ENCODE measurements at regions of chr2 and their contacts with region 1.

Region 1: GRCh38 chr2:73385595-73386341 is at the start of gene ALMS1:
- DNase-seq: peak; percentile 94
- ATAC-seq: peak; percentile 89
- H3K4me3 Mint-ChIP-seq: peak within 1 kb of the TSS; percentile 91
- H3K27ac Mint-ChIP-seq: peak within 1 kb of the TSS; percentile 91
- H3K4me1 Mint-ChIP-seq: peaks cover 27% of the 10 kb centered on the region
- H3K27me3 Mint-ChIP-seq: no peaks in the 10 kb centered on the region
- total RNA-seq, gene ALMS1: 19.2 to 24.0 TPM

Region 2: DNA sequence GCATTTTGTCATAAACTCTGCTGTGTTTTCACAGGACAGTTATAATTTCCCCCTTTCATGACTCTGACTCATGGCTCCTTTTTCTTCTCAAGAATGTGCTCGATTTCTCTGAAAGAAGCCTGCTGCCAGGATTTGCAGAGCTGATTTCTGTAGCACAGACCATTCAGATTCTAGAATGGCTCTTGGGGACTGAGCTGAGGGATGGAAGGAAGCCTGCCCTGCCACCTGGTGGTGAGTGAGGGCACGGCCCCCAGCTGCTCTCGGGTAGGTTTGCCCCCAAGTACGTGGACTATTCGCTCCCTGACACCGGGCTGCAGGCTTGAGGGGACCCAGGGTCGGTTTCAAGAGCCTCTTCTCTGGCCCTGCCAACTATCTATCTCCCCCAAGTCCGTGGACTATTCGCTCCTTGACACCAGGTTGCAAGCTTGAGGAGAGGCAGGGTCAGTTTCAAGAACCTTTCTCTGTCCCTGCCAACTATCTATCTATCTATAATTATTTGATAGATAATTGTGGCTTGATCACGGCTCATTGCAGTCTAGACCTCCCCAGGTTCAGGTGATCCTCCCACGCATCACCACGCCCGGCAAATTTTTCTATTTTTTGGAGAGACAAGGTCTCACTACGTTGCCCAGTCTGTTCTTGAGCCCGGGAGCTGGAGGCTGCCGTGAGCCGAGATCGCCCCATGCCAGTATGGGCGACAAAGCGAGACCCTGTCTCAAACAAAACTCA is 173.2 kb before region 1 on chr2:
- CTCF ChIA-PET with region 1: no interaction called
- POLR2A ChIA-PET with region 1: no interaction called
- intact Hi-C with region 1: loop called (anchors 1 kb)
- DNase-seq: peak; percentile 89
- ATAC-seq: peak; percentile 79
- H3K4me3 Mint-ChIP-seq: no peak overlapping the region
- H3K27ac Mint-ChIP-seq: no peak overlapping the region
- H3K4me1 Mint-ChIP-seq: peaks cover 32% of the 10 kb centered on the region
- H3K27me3 Mint-ChIP-seq: peaks cover 7% of the 10 kb centered on the region

Region 3: GRCh38 chr2:73284296-73285158 is 101.2 kb before region 1 on chr2 and contains the start of gene FBXO41:
- CTCF ChIA-PET with region 1: interaction called, 5 read pairs
- POLR2A ChIA-PET with region 1: interaction called, 4 read pairs
- intact Hi-C with region 1: loop called in 1 of 2 experiments (anchors 1 kb)
- DNase-seq: peak; percentile 86
- ATAC-seq: peak; percentile 85
- H3K4me3 Mint-ChIP-seq: peak within 1 kb of the TSS; percentile 78
- H3K27ac Mint-ChIP-seq: peak within 1 kb of the TSS; percentile 75
- H3K4me1 Mint-ChIP-seq: peaks cover 15% of the 10 kb centered on the region
- H3K27me3 Mint-ChIP-seq: peaks cover 19% of the 10 kb centered on the region
- total RNA-seq, gene FBXO41: 27.7 to 29.5 TPM

Region 4: GRCh38 chr2:74119912-74120825 is 734.4 kb after region 1 on chr2:
- CTCF ChIA-PET with region 1: no interaction called
- POLR2A ChIA-PET with region 1: no interaction called
- intact Hi-C with region 1: loop called in 1 of 2 experiments (anchors 5 kb)
- DNase-seq: peak; percentile 92
- ATAC-seq: peak; percentile 97
- H3K4me3 Mint-ChIP-seq: peak overlapping the region; percentile 81
- H3K27ac Mint-ChIP-seq: peak overlapping the region; percentile 89
- H3K4me1 Mint-ChIP-seq: peaks cover 7% of the 10 kb centered on the region
- H3K27me3 Mint-ChIP-seq: peaks cover 3% of the 10 kb centered on the region

Region 5: DNA sequence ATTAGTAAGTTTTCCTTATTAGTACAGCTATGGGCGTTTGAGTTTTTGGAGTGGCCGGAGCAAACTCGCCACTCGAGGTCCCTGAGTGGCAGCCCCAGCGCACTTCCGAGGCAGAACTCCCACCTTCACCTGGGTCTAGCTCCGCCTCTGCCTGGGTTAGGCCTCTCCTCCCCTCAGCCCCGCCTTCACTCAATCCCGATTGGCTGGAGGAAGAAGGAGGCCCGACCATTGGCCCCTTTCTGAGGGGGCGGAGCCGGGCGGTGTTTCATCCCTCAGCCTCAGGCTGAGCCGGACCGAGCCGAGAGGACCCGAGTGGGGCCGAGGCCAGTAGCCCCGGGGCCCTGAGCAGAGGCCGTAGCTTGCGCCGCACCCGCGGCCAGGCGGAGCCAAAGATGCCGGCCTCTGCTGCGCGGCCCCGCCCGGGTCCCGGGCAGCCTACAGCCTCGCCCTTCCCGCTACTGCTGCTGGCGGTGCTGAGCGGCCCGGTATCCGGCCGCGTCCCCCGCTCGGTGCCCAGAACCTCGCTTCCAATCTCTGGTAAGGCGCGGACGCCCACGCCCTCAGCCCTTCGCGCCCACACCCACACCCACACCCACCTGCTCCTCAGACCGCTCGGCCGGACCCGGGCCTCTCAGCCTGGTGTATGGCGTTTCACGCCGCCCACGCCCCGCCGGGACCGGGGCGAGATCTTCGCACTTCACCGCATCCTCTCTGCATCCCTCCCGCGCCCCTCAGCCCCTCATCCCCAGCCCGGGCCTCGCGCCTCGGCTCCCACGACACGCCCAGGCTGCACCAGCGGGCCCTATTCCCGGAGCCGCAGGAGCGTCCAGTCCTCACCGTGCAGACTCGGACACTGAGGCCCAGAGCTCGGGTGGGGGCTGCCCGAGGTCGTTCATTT is 1268.5 kb after region 1 on chr2 and contains the start of gene SEMA4F:
- CTCF ChIA-PET with region 1: interaction called, 3 read pairs
- POLR2A ChIA-PET with region 1: no interaction called
- intact Hi-C with region 1: loop called in 1 of 2 experiments (anchors 10 kb)
- DNase-seq: peak; percentile 97
- ATAC-seq: peak; percentile 100
- H3K4me3 Mint-ChIP-seq: peak within 1 kb of the TSS; percentile 76
- H3K27ac Mint-ChIP-seq: peak within 1 kb of the TSS; percentile 49
- H3K4me1 Mint-ChIP-seq: peaks cover 13% of the 10 kb centered on the region
- H3K27me3 Mint-ChIP-seq: peaks cover 7% of the 10 kb centered on the region
- total RNA-seq, gene SEMA4F: 5.7 to 7.4 TPM